Kidney (tissue), 22 donors: ENCODE measurements at regions of chr11 and their contacts with region 1.

Region 1: GRCh38 chr11:69642913-69643632 is 2.1 kb downstream of the CCND1 start:
- DNase-seq: peak; percentile 86 to 94 (median 91)
- H3K4me3 ChIP-seq: peak overlapping the region in 2 of 3 donors; percentile 70 to 87
- H3K27ac ChIP-seq: peak overlapping the region; percentile 77 to 85
- H3K4me1 ChIP-seq: peaks cover 0 to 15% (median 9%) of the 10 kb centered on the region in 3 donors
- H3K27me3 ChIP-seq: no peaks in the 10 kb centered on the region
- CTCF ChIP-seq: peak; percentile 99

Region 2: DNA sequence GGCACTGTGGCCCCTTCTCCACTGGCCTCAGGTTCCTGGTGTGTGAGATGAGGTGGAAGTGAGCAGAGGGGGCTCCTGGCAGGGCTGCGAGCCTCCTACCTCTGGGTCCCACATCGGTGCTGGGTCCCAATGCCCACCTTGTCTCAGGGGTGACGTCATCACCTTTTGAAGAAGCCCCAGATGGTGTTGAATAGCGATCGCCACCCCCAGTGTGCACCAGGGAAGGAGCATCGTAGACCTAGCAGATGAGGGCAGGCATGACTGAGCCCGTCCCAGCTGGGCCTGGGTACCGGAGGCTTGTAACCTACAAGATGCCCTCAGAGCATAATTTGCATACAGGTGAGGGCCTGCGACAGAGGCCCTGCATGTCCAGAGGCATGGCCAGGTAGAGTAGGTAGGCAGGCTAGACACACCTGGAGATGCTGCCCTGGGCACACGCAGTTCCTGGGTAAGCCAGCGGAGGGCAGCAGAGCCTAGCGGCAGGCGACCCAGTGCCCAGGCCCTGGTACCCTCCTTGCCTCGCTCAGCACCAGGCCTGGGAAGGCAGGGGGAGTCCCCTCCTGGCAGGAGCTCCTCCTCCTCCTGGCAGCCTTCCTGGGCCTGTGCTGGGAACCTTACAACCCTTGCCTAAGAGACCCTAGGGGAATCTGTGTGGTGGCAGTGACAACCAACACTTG is 541.8 kb before region 1 on chr11:
- intact Hi-C with region 1: loop called (anchors 5 kb)
- DNase-seq: peak; percentile 83 to 92 (median 89)
- H3K4me3 ChIP-seq: no peak overlapping the region
- H3K27ac ChIP-seq: no peak overlapping the region
- H3K4me1 ChIP-seq: peaks cover 0 to 17% (median 6%) of the 10 kb centered on the region in 3 donors
- H3K27me3 ChIP-seq: no peaks in the 10 kb centered on the region
- CTCF ChIP-seq: peak; percentile 99

Region 3: DNA sequence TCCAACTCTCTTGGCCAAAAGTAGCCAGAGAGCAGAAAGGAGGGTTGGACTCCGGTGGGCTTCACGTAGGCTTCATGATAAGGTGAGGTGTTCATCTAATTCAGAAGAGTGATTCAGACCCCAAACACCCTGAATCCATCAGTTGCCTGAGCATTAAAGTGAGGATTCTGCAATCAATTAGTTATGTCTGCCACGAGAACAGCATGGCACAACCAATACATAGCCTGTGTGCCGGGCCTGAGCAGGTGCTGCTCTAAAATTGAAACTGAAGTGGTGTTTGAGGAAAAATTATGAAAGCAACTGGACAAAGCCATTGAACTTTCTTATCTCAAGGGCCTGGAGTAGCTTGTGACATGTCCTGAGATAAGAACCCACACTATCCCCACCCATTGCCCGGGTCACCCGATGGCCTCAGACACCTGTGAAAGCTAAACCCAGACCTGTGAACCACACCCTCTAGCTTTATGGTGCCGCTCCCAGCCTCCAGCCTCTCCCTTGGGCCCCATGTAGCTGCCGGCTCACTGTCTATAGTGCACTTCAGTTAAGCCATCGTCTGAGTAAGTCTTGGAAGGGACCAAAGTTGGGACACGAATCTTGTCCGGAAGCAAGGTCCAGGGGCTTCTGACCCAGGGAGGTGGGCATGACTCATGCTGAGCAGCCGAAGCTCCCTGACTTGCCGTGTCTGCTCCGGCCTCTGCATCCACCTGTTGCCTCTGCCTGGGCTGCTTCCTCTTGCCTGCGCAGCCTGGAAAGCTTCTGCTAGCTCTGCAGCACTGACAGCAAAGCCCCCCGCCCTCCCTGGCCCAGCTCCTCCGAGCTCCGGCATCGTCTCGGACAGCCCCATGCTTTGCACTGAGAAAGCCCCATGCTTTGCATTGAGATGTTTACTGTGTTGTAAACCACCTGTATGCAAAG is 354.8 kb before region 1 on chr11:
- intact Hi-C with region 1: loop called (anchors 5 kb)
- DNase-seq: peak in 1 of 5 donors; percentile 60
- H3K4me3 ChIP-seq: no peak overlapping the region
- H3K27ac ChIP-seq: no peak overlapping the region
- H3K4me1 ChIP-seq: peaks cover 2 to 4% (median 4%) of the 10 kb centered on the region in 3 donors
- H3K27me3 ChIP-seq: no peaks in the 10 kb centered on the region
- CTCF ChIP-seq: no peak

Region 4: DNA sequence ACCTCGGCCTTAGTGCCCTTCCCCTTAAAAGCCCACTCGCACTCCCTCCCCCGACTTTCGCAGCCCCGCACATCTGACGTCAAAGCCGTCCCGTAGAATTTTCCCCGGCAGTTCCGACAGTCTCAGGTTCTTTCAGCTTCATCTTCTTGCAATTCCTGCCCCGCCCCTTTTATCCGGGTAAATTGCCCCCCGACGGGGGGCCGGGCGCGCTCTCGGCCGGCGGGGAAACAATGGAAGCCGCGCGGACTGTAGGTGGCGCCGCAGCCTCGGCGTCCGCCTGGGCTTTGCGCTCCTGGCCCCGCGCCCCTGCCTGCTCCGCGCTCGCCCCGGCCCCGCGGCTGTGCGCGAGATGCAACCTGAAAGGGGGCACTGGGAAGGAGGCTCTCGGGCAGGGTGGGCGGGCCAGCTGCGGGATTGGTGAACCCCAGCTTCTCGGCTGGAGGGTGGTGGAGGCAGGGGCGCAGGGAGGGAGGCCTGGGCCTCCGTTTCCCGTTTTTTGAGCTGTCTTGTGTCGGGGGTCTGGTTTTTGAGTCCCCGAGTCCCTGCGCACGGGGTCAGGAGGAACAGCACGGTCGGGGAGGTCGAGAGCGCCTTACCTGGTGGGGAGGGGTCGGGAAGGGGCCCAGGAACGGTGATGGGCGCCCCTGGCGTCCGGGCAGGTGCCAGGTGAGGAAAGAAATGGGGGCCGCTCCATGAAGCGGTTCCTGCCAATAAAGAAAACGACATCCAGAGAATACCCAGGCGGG is 61.6 kb after region 1 on chr11:
- intact Hi-C with region 1: no loop called
- DNase-seq: peak in 3 of 5 donors; percentile 59 to 74 (median 68)
- H3K4me3 ChIP-seq: no peak overlapping the region
- H3K27ac ChIP-seq: no peak overlapping the region
- H3K4me1 ChIP-seq: peaks cover 0 to 3% (median 0%) of the 10 kb centered on the region in 3 donors
- H3K27me3 ChIP-seq: peaks cover 8% of the 10 kb centered on the region
- CTCF ChIP-seq: peak; percentile 29

Region 5: GRCh38 chr11:69721745-69722144 is 78.7 kb after region 1 on chr11:
- intact Hi-C with region 1: no loop called
- DNase-seq: peak in 1 of 5 donors; percentile 57
- H3K4me3 ChIP-seq: no peak overlapping the region
- H3K27ac ChIP-seq: no peak overlapping the region
- H3K4me1 ChIP-seq: no peaks in the 10 kb centered on the region
- H3K27me3 ChIP-seq: no peaks in the 10 kb centered on the region
- CTCF ChIP-seq: peak; percentile 14